ENCODE measurements at regions of chr18 and their contacts with region 1.

Region 1: GRCh38 chr18:50194631-50195532 is at the start of gene MYO5B:
- DNase-seq: peak; percentile 78
- H3K4me3 Mint-ChIP-seq: peak within 1 kb of the TSS; percentile 71
- H3K27ac Mint-ChIP-seq: no peak within 1 kb of the TSS
- H3K4me1 Mint-ChIP-seq: peaks cover 22% of the 10 kb centered on the region
- H3K27me3 Mint-ChIP-seq: peaks cover 31% of the 10 kb centered on the region
- CTCF ChIP-seq: peak; percentile 49
- total RNA-seq, gene MYO5B: 25.9 and 26.7 TPM in 2 replicates

Region 2: GRCh38 chr18:49795612-49796552 is 399.0 kb before region 1 on chr18:
- CTCF ChIA-PET with region 1: no interaction called
- POLR2A ChIA-PET with region 1: no interaction called
- intact Hi-C with region 1: no loop called
- DNase-seq: no peak
- H3K4me3 Mint-ChIP-seq: no peak overlapping the region
- H3K27ac Mint-ChIP-seq: no peak overlapping the region
- H3K4me1 Mint-ChIP-seq: no peaks in the 10 kb centered on the region
- H3K27me3 Mint-ChIP-seq: no peaks in the 10 kb centered on the region
- CTCF ChIP-seq: no peak

Region 3: DNA sequence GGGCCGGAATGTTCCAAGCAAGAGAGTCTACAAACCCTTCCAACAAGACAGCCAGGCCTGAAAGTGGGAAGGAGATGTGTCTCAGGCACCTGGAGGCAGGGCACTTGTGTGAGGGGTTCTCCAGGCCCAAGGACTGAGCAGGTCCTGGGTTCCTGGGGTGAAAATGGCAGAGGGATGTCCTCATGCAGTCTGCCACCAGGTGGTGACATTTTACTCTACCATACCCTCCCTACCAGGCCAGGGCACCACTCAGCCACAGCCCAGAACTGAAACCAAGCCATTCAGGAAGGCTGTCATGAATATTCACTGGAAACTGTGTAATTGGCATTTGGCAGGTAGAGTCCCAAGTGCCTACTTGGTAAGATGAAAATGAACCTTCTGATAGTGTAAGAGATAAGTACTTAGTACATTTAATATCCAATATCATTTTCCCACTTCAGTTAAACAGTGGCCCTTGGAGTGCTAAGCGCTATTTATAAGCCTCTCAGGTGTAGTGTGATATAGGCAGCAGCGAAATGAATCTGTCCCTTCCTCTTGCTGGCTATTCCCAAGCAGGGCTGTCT is 185.0 kb before region 1 on chr18:
- CTCF ChIA-PET with region 1: interaction called, 9 read pairs
- POLR2A ChIA-PET with region 1: no interaction called
- intact Hi-C with region 1: loop called (anchors 2 kb)
- DNase-seq: peak; percentile 60
- H3K4me3 Mint-ChIP-seq: no peak overlapping the region
- H3K27ac Mint-ChIP-seq: peak overlapping the region; percentile 5
- H3K4me1 Mint-ChIP-seq: peaks cover 21% of the 10 kb centered on the region
- H3K27me3 Mint-ChIP-seq: no peaks in the 10 kb centered on the region
- CTCF ChIP-seq: peak; percentile 33

Region 4: GRCh38 chr18:50051288-50051687 is 143.6 kb before region 1 on chr18:
- CTCF ChIA-PET with region 1: interaction called, 11 read pairs
- POLR2A ChIA-PET with region 1: interaction called, 3 read pairs
- intact Hi-C with region 1: loop called (anchors 1 kb)
- DNase-seq: peak; percentile 41
- H3K4me3 Mint-ChIP-seq: no peak overlapping the region
- H3K27ac Mint-ChIP-seq: no peak overlapping the region
- H3K4me1 Mint-ChIP-seq: no peaks in the 10 kb centered on the region
- H3K27me3 Mint-ChIP-seq: no peaks in the 10 kb centered on the region
- CTCF ChIP-seq: peak; percentile 34

Region 5: GRCh38 chr18:50111265-50111792 is 83.6 kb before region 1 on chr18:
- CTCF ChIA-PET with region 1: interaction called, 8 read pairs
- POLR2A ChIA-PET with region 1: interaction called, 4 read pairs
- intact Hi-C with region 1: loop called (anchors 1 kb)
- DNase-seq: peak; percentile 33
- H3K4me3 Mint-ChIP-seq: no peak overlapping the region
- H3K27ac Mint-ChIP-seq: no peak overlapping the region
- H3K4me1 Mint-ChIP-seq: peaks cover 7% of the 10 kb centered on the region
- H3K27me3 Mint-ChIP-seq: no peaks in the 10 kb centered on the region
- CTCF ChIP-seq: peak; percentile 16

Region 6: DNA sequence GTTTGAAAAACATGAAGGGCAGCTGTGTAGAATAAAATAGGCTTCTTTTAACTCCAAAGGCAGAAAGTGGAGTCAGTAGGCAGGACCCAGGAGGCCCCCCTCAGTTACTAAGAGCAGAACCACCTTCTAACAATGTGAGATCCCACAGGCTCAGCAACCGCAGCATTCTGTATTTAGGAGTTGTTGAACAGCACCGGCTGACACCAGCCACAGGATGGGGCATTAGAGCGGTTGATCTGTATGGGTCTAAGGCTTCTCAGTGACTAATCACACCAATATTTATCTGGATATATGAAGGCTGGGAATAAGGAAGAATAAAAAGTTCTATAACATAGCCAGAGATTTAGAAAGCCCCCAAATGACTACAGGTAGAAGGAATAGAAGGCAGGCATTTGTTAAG is 51.6 kb before region 1 on chr18:
- CTCF ChIA-PET with region 1: interaction called, 6 read pairs
- POLR2A ChIA-PET with region 1: interaction called, 12 read pairs
- intact Hi-C with region 1: loop called (anchors 5 kb)
- DNase-seq: peak; percentile 9
- H3K4me3 Mint-ChIP-seq: no peak overlapping the region
- H3K27ac Mint-ChIP-seq: no peak overlapping the region
- H3K4me1 Mint-ChIP-seq: peaks cover 19% of the 10 kb centered on the region
- H3K27me3 Mint-ChIP-seq: no peaks in the 10 kb centered on the region
- CTCF ChIP-seq: no peak

Region 7: GRCh38 chr18:50170004-50170403 is 24.9 kb before region 1 on chr18:
- CTCF ChIA-PET with region 1: no interaction called
- POLR2A ChIA-PET with region 1: no interaction called
- intact Hi-C with region 1: no loop called
- DNase-seq: no peak
- H3K4me3 Mint-ChIP-seq: no peak overlapping the region
- H3K27ac Mint-ChIP-seq: no peak overlapping the region
- H3K4me1 Mint-ChIP-seq: no peaks in the 10 kb centered on the region
- H3K27me3 Mint-ChIP-seq: no peaks in the 10 kb centered on the region
- CTCF ChIP-seq: no peak

Region 8: DNA sequence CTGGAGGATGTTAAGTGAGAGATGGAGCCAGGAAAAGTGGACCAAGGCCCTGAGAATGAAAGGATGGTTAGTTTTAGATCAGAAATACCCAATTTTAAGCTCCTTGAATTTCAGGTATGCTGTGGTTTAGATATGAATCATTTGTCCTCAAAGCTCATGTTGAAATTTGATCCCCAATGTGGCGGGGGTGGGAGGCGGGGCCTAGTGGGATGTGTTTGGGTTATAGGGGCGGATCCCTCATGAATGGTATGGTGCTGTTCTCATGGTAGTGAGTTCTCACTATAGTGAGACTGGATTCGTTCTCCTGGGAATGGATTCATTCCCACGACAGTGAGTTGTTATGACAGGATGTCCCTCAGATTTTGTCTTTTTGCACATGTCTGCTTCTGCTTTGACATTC is 11.3 kb before region 1 on chr18:
- CTCF ChIA-PET with region 1: interaction called, 10 read pairs
- POLR2A ChIA-PET with region 1: interaction called, 8 read pairs
- intact Hi-C with region 1: no loop called
- DNase-seq: peak; percentile 93
- H3K4me3 Mint-ChIP-seq: no peak overlapping the region
- H3K27ac Mint-ChIP-seq: no peak overlapping the region
- H3K4me1 Mint-ChIP-seq: peaks cover 12% of the 10 kb centered on the region
- H3K27me3 Mint-ChIP-seq: no peaks in the 10 kb centered on the region
- CTCF ChIP-seq: no peak